ENCODE measurements at regions of chr22 and their contacts with region 1.

Region 1: GRCh38 chr22:35582861-35583670 is 34.1 kb downstream of the MB start:
- DNase-seq: peak; percentile 61
- ATAC-seq: peak; percentile 68
- H3K4me3 Mint-ChIP-seq: no peak overlapping the region
- H3K27ac Mint-ChIP-seq: no peak overlapping the region
- H3K4me1 Mint-ChIP-seq: no peaks in the 10 kb centered on the region
- H3K27me3 Mint-ChIP-seq: no peaks in the 10 kb centered on the region

Region 2: GRCh38 chr22:35350539-35351503 is 232.2 kb before region 1 on chr22:
- CTCF ChIA-PET with region 1: interaction called, 31 read pairs
- POLR2A ChIA-PET with region 1: no interaction called
- DNase-seq: peak; percentile 94
- ATAC-seq: peak; percentile 94
- H3K4me3 Mint-ChIP-seq: peak overlapping the region; percentile 76
- H3K27ac Mint-ChIP-seq: peak overlapping the region; percentile 57
- H3K4me1 Mint-ChIP-seq: peaks cover 28% of the 10 kb centered on the region
- H3K27me3 Mint-ChIP-seq: peaks cover 6% of the 10 kb centered on the region

Region 3: DNA sequence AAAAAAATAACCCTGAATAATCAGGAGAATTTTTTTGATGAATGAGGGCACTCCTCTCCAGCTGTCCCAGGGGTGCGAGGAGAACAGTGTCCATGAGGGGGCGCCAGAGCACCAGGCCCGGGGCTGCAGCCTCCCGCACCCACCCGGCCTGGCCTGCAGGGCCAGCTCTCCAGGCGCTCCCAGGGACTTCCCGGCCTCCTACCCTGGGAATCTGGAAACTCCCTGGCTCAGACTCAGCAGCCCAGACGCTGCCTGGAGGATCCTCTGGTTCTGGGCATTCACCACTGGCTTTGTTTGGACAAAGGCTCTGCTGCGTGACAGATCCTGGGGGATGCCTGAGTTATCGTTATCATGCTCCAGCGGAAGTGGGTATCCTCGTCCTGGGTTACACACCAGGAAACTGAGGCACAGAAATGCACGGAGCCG is 152.2 kb before region 1 on chr22:
- CTCF ChIA-PET with region 1: interaction called, 16 read pairs
- POLR2A ChIA-PET with region 1: no interaction called
- DNase-seq: peak; percentile 63
- ATAC-seq: peak; percentile 72
- H3K4me3 Mint-ChIP-seq: no peak overlapping the region
- H3K27ac Mint-ChIP-seq: no peak overlapping the region
- H3K4me1 Mint-ChIP-seq: no peaks in the 10 kb centered on the region
- H3K27me3 Mint-ChIP-seq: no peaks in the 10 kb centered on the region

Region 4: GRCh38 chr22:35638410-35638809 is 55.3 kb after region 1 on chr22:
- CTCF ChIA-PET with region 1: no interaction called
- POLR2A ChIA-PET with region 1: no interaction called
- DNase-seq: no peak
- ATAC-seq: no peak
- H3K4me3 Mint-ChIP-seq: no peak overlapping the region
- H3K27ac Mint-ChIP-seq: no peak overlapping the region
- H3K4me1 Mint-ChIP-seq: peaks cover 8% of the 10 kb centered on the region
- H3K27me3 Mint-ChIP-seq: peaks cover 12% of the 10 kb centered on the region

Measured in activated CD8-positive, alpha-beta T cell treated with anti-CD3 and anti-CD28 coated beads, Interleukin-2, amount 10 ng/mL, durations not matched to agents 7 days and 5 days (primary cell).